Activated B cell treated with CpG ODN at 0.5 μM for 24 hours (primary cell): ENCODE measurements at regions of chr12 and their contacts with region 1.

Region 1: GRCh38 chr12:94244165-94245133 is 96.1 kb downstream of the PLXNC1 start:
- DNase-seq: peak; percentile 28
- ATAC-seq: peak; percentile 22
- H3K4me3 Mint-ChIP-seq: peak overlapping the region; percentile 13
- H3K27ac Mint-ChIP-seq: peak overlapping the region; percentile 72
- H3K4me1 Mint-ChIP-seq: peaks cover 66% of the 10 kb centered on the region
- H3K27me3 Mint-ChIP-seq: no peaks in the 10 kb centered on the region
- CTCF ChIP-seq: no peak

Region 2: DNA sequence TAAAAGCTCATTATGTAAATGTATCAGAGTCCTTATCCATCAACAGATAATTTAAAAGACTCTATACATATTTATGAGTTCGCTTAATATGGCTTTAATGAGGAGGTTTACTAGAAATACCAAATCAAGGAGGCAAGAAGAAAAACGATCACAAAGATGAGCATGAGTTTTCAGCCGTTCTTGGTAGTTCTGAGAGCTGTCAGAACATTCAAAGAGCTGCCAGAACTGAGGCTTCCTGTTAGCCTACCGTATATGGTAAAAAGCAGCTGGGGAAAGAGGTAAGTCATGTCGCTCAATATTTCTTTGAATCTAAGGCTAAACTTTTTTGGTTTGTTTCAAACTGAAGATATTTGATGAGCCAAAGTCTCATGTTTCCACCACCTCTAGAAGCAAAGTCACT is 211.3 kb before region 1 on chr12:
- CTCF ChIA-PET with region 1: no interaction called
- POLR2A ChIA-PET with region 1: no interaction called
- intact Hi-C with region 1: no loop called
- DNase-seq: no peak
- ATAC-seq: no peak
- H3K4me3 Mint-ChIP-seq: no peak overlapping the region
- H3K27ac Mint-ChIP-seq: no peak overlapping the region
- H3K4me1 Mint-ChIP-seq: no peaks in the 10 kb centered on the region
- H3K27me3 Mint-ChIP-seq: peaks cover 41% of the 10 kb centered on the region
- CTCF ChIP-seq: no peak

Region 3: GRCh38 chr12:94092516-94093241 is 151.8 kb before region 1 on chr12:
- CTCF ChIA-PET with region 1: no interaction called
- POLR2A ChIA-PET with region 1: no interaction called
- intact Hi-C with region 1: no loop called
- DNase-seq: no peak
- ATAC-seq: no peak
- H3K4me3 Mint-ChIP-seq: no peak overlapping the region
- H3K27ac Mint-ChIP-seq: no peak overlapping the region
- H3K4me1 Mint-ChIP-seq: no peaks in the 10 kb centered on the region
- H3K27me3 Mint-ChIP-seq: peaks cover 22% of the 10 kb centered on the region
- CTCF ChIP-seq: no peak

Region 4: GRCh38 chr12:94126067-94126466 is 118.4 kb before region 1 on chr12:
- CTCF ChIA-PET with region 1: no interaction called
- POLR2A ChIA-PET with region 1: no interaction called
- intact Hi-C with region 1: no loop called
- DNase-seq: no peak
- ATAC-seq: no peak
- H3K4me3 Mint-ChIP-seq: no peak overlapping the region
- H3K27ac Mint-ChIP-seq: no peak overlapping the region
- H3K4me1 Mint-ChIP-seq: peaks cover 48% of the 10 kb centered on the region
- H3K27me3 Mint-ChIP-seq: no peaks in the 10 kb centered on the region
- CTCF ChIP-seq: no peak

Region 5: DNA sequence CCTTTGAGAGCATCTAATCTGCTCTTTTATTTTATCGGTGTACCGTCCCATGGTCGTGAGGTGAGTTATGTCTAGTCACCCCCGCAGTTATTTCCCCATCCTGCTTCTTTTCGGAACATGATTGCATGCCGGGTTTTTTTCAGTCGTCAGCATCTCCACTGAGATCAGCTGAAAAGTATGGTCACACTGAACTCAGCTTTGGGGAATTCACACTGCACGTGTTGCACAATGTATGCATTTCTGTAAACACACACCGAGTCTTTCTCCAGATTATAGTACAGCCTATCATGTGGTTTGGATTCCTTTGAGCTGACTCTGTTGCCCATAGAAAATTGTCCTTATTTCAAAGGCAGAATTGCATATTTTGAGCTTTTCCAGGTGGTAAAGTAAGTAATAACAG is 71.5 kb before region 1 on chr12:
- CTCF ChIA-PET with region 1: no interaction called
- POLR2A ChIA-PET with region 1: no interaction called
- intact Hi-C with region 1: loop called (anchors 1 kb)
- DNase-seq: no peak
- ATAC-seq: no peak
- H3K4me3 Mint-ChIP-seq: no peak overlapping the region
- H3K27ac Mint-ChIP-seq: peak overlapping the region; percentile 30
- H3K4me1 Mint-ChIP-seq: peaks cover 43% of the 10 kb centered on the region
- H3K27me3 Mint-ChIP-seq: no peaks in the 10 kb centered on the region
- CTCF ChIP-seq: no peak

Region 6: GRCh38 chr12:94277426-94278000 is 33.1 kb after region 1 on chr12:
- CTCF ChIA-PET with region 1: no interaction called
- POLR2A ChIA-PET with region 1: no interaction called
- intact Hi-C with region 1: no loop called
- DNase-seq: no peak
- ATAC-seq: no peak
- H3K4me3 Mint-ChIP-seq: no peak overlapping the region
- H3K27ac Mint-ChIP-seq: no peak overlapping the region
- H3K4me1 Mint-ChIP-seq: peaks cover 17% of the 10 kb centered on the region
- H3K27me3 Mint-ChIP-seq: no peaks in the 10 kb centered on the region
- CTCF ChIP-seq: no peak

Region 7: GRCh38 chr12:94289461-94290312 is 45.2 kb after region 1 on chr12:
- CTCF ChIA-PET with region 1: no interaction called
- POLR2A ChIA-PET with region 1: no interaction called
- intact Hi-C with region 1: loop called (anchors 10 kb)
- DNase-seq: no peak
- ATAC-seq: no peak
- H3K4me3 Mint-ChIP-seq: no peak overlapping the region
- H3K27ac Mint-ChIP-seq: peak overlapping the region; percentile 37
- H3K4me1 Mint-ChIP-seq: peaks cover 19% of the 10 kb centered on the region
- H3K27me3 Mint-ChIP-seq: no peaks in the 10 kb centered on the region
- CTCF ChIP-seq: no peak